Calu3 (cell line): ENCODE measurements at regions of chrX and their contacts with region 1.

Region 1: GRCh38 chrX:76253432-76253831 is 80.6 kb downstream of the PBDC1 start:
- DNase-seq: peak; percentile 34
- H3K4me3 Mint-ChIP-seq: no peak overlapping the region
- H3K27ac Mint-ChIP-seq: no peak overlapping the region
- H3K4me1 Mint-ChIP-seq: no peaks in the 10 kb centered on the region
- H3K27me3 Mint-ChIP-seq: no peaks in the 10 kb centered on the region
- CTCF ChIP-seq: no peak

Region 2: DNA sequence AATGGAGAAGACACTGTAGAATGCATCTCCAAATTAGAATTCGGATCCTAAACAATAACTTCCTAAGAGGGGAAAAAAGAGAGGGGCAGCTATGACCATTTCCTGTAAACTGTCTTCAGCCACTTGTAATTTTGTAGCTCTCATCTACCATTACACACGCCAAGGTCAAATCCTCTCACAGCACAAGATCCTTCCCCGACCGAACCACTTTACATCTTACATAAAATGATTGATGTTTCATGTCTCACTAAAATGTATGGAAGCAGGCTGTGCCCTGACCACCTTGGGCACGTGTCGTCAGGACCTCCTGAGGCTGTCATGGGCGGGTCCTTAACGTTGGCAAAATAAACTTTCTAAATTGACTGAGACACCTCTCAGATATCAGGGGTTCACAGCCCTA is 104.7 kb before region 1 on chrX:
- CTCF ChIA-PET with region 1: interaction called, 3 read pairs
- intact Hi-C with region 1: loop called (anchors 5 kb)
- DNase-seq: peak; percentile 8
- H3K4me3 Mint-ChIP-seq: peak overlapping the region; percentile 55
- H3K27ac Mint-ChIP-seq: peak overlapping the region; percentile 87
- H3K4me1 Mint-ChIP-seq: peaks cover 14% of the 10 kb centered on the region
- H3K27me3 Mint-ChIP-seq: no peaks in the 10 kb centered on the region
- CTCF ChIP-seq: no peak

Region 3: GRCh38 chrX:76172325-76172893 is 81.0 kb before region 1 on chrX:
- CTCF ChIA-PET with region 1: no interaction called
- intact Hi-C with region 1: loop called (anchors 5 kb)
- DNase-seq: no peak
- H3K4me3 Mint-ChIP-seq: peak overlapping the region; percentile 92
- H3K27ac Mint-ChIP-seq: peak overlapping the region; percentile 95
- H3K4me1 Mint-ChIP-seq: peaks cover 35% of the 10 kb centered on the region
- H3K27me3 Mint-ChIP-seq: no peaks in the 10 kb centered on the region
- CTCF ChIP-seq: no peak